ENCODE measurements at regions of chr10 and their contacts with region 1.

Region 1: DNA sequence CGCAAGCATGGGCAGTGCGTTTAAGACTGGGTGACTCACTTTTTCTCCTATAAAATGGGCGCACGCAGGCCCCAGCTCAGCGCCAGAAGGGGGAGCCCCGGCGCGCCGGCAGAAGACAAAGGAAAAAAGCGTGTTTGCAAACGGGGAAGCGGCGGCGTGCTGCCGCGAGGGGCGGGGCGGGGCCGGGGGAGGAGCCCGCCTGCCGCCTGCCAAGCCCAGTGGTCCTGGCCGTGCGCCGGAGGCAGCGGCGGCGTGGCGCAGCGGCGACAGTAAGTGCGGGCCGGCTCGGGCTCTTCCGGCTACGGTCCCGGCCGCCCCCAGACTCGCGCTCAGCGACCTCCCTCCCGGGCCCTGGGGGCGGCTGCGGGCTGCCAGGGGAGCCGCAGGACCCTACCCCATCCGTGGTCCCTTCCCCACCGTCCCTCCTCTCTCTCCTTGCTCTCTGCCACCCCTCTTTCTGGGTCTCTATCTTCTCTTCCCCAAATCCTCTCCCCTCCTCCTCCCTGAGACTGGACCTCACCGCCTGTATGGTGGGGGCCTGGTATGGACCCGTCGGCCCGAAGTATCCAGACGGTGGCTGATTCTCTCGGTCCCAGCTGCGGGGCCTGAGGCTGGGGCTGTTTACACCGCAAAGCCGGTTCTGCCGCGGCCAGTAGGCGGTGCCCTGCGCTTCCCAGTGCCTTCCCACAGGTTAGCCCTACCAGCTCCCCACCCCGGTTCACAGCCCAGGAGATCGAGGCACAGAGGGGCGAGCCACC is at the start of gene SLC29A3:
- DNase-seq: peak; percentile 78 to 90 (median 84)
- H3K4me3 ChIP-seq: peak within 1 kb of the TSS; percentile 77 to 93 (median 86)
- H3K4me3 Mint-ChIP-seq: peak within 1 kb of the TSS; percentile 97 to 98
- H3K27ac ChIP-seq: peak within 1 kb of the TSS; percentile 38 to 83
- H3K27ac Mint-ChIP-seq: peak within 1 kb of the TSS; percentile 85 to 96 (median 91)
- H3K4me1 ChIP-seq: peaks cover 49 to 58% of the 10 kb centered on the region in 2 donors
- H3K4me1 Mint-ChIP-seq: peaks cover 66% of the 10 kb centered on the region
- H3K27me3 ChIP-seq: no peaks in the 10 kb centered on the region
- H3K27me3 Mint-ChIP-seq: peaks cover 0 to 4% (median 0%) of the 10 kb centered on the region in 3 donors
- CTCF ChIP-seq: peak; percentile 69
- polyA plus RNA-seq, gene SLC29A3: 9.7 to 28.4 (median 16.6) TPM

Region 2: DNA sequence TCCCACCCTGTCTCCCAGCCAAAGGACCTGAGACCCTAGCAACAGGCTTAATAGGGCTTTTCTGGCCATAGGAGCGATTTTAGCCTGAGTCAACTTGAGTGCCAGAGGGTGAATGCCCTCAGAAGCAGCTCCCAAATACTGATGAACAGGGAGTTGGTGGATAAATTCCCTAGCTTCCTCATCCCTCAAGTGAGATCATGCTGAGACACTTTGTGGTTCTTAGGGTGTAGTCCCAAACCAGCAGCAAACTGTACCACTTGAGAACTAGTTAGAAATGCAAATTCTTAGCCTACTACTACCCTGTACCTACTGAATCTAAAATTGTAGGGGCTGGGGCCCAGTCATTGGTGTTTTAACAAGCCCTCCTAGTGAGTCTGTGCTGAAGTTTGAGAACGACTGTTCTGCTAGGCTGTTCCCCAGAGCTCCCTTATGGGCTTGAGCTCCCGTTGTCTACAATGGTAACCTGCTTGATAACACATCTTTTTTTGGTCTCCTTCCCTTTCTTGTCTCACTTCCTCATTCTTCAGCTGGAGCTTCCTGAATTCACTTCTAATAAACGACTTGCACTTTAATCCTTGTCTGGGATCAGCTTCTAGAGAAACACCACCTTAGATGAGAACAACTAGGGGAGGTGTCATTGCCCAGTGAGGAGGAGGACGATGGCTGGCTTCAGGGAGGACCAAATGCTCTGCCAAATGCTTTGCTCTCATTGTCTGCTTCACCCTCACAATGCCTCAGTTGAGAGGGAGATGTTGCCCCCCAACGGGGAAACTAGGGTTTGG is 59.3 kb after region 1 on chr10:
- intact Hi-C with region 1: loop called (anchors 5 kb)
- DNase-seq: peak; percentile 54 to 80 (median 76)
- H3K4me3 ChIP-seq: peak overlapping the region in 1 of 3 experiments; percentile 78
- H3K4me3 Mint-ChIP-seq: peak overlapping the region; percentile 52 to 65
- H3K27ac ChIP-seq: peak overlapping the region; percentile 74 to 89
- H3K27ac Mint-ChIP-seq: peak overlapping the region; percentile 78 to 94 (median 92)
- H3K4me1 ChIP-seq: peaks cover 75 to 78% of the 10 kb centered on the region in 2 donors
- H3K4me1 Mint-ChIP-seq: peaks cover 64% of the 10 kb centered on the region
- H3K27me3 ChIP-seq: no peaks in the 10 kb centered on the region
- H3K27me3 Mint-ChIP-seq: peaks cover 0 to 2% (median 2%) of the 10 kb centered on the region in 3 donors
- CTCF ChIP-seq: no peak

Region 3: DNA sequence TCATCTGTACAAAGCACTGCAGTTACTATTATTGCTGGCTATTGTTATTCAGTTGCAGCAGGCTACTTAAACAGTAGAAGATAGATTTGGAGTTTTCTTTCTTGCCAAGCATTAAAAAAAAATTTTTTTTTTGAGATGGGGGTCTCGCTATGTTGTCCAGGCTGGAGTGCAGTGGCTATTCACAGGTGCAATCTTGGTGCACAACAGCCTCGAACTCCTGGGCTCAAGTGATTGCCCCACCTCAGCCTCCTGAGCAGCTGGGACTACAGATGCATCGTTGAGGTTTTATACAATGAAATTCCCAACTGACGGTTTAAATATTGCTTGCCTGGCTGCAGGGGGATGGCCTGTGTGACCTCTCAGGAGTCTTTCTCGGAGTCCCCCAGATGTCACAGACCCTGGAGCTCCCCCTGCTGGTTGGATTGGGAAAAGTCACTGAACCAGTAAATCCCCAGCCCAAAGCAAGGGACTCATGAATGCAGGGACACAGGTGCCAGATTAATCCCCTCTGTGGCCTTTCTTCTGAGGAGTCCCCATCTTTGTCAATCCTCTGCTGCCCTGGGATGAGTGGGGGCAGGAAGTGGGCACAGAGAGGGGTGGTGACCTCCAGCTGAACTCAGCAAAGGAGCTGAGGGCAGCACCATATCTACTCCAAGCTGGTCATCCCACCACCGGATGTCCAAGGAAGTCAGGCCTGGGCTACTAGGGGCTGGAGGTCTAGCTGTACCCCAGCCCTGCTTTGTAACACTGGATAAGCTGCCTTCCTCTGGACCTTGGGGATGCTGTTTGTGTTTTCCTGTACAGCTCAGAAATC is 250.8 kb after region 1 on chr10:
- intact Hi-C with region 1: loop called (anchors 1 to 5 kb)
- DNase-seq: peak; percentile 51 to 63 (median 63)
- H3K4me3 ChIP-seq: no peak overlapping the region
- H3K4me3 Mint-ChIP-seq: no peak overlapping the region
- H3K27ac ChIP-seq: no peak overlapping the region
- H3K27ac Mint-ChIP-seq: no peak overlapping the region
- H3K4me1 ChIP-seq: no peaks in the 10 kb centered on the region
- H3K4me1 Mint-ChIP-seq: no peaks in the 10 kb centered on the region
- H3K27me3 ChIP-seq: no peaks in the 10 kb centered on the region
- H3K27me3 Mint-ChIP-seq: peaks cover 1 to 3% (median 1%) of the 10 kb centered on the region in 3 donors
- CTCF ChIP-seq: peak; percentile 88

Region 4: DNA sequence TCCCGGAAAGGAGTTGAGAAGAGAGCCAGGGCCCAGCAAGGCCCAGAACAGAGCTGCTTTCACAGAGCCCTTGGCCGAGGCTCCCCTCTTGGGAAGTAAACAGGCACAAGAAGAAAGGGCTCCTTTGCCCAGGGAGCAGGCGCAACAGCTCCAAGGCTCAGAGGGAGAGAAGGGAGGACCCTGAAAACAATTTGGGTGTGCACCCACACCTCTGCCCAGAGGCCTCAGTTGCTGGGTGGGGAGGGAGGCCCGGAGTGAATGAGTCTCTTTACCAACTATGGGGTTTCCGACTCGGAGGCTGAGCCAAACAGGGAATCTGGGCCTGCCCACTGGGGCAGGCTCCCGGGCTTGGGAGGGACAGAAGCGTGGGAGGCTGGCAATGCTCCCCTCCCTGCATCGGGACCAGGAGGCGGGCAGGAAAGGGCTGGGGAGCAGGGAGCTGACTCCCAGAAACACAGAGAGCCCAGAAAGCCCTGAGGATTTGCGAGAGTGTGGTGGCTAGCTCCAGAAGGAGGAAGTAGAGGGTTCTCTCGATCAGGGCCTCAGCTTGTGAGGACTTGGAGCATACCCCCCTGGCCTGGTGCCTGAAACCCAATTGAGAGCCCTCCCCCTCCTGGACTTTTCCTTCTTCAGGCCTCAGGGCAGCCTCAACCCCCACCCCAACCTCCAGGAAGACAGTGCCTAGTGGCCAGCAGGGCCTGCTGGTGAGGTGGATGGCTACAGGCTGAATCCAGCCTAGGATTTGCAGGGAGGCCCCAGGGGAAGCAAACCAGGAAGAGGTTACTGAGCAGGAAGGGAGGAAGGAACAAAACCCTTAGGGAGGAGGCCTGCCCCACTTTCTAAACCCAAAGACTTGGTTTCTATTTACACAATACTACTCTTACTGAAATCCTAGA is 394.2 kb after region 1 on chr10:
- intact Hi-C with region 1: loop called in 1 of 2 experiments (anchors 5 kb)
- DNase-seq: peak; percentile 49 to 79 (median 63)
- H3K4me3 ChIP-seq: peak overlapping the region; percentile 64 to 89 (median 75)
- H3K4me3 Mint-ChIP-seq: peak overlapping the region; percentile 95 to 98
- H3K27ac ChIP-seq: peak overlapping the region; percentile 84
- H3K27ac Mint-ChIP-seq: peak overlapping the region; percentile 90 to 97 (median 96)
- H3K4me1 ChIP-seq: peaks cover 93 to 97% of the 10 kb centered on the region in 2 donors
- H3K4me1 Mint-ChIP-seq: peaks cover 96% of the 10 kb centered on the region
- H3K27me3 ChIP-seq: no peaks in the 10 kb centered on the region
- H3K27me3 Mint-ChIP-seq: peaks cover 0 to 1% (median 0%) of the 10 kb centered on the region in 3 donors
- CTCF ChIP-seq: no peak

Region 5: GRCh38 chr10:71812016-71812912 is 493.0 kb after region 1 on chr10:
- intact Hi-C with region 1: loop called in 1 of 2 experiments (anchors 10 kb)
- DNase-seq: peak; percentile 67 to 76 (median 68)
- H3K4me3 ChIP-seq: no peak overlapping the region
- H3K4me3 Mint-ChIP-seq: no peak overlapping the region
- H3K27ac ChIP-seq: peak overlapping the region; percentile 6 to 31
- H3K27ac Mint-ChIP-seq: peak overlapping the region in 5 of 7 donors; percentile 53 to 78 (median 58)
- H3K4me1 ChIP-seq: peaks cover 52 to 78% of the 10 kb centered on the region in 2 donors
- H3K4me1 Mint-ChIP-seq: peaks cover 64% of the 10 kb centered on the region
- H3K27me3 ChIP-seq: no peaks in the 10 kb centered on the region
- H3K27me3 Mint-ChIP-seq: peaks cover 0 to 4% (median 0%) of the 10 kb centered on the region in 3 donors
- CTCF ChIP-seq: peak; percentile 85

Region 6: GRCh38 chr10:71909399-71910083 is 590.3 kb after region 1 on chr10:
- intact Hi-C with region 1: loop called in 1 of 2 experiments (anchors 10 kb)
- DNase-seq: no peak
- H3K4me3 ChIP-seq: no peak overlapping the region
- H3K4me3 Mint-ChIP-seq: no peak overlapping the region
- H3K27ac ChIP-seq: no peak overlapping the region
- H3K27ac Mint-ChIP-seq: peak overlapping the region in 1 of 7 donors; percentile 26
- H3K4me1 ChIP-seq: no peaks in the 10 kb centered on the region
- H3K4me1 Mint-ChIP-seq: peaks cover 10% of the 10 kb centered on the region
- H3K27me3 ChIP-seq: no peaks in the 10 kb centered on the region
- H3K27me3 Mint-ChIP-seq: peaks cover 2 to 6% (median 2%) of the 10 kb centered on the region in 3 donors
- CTCF ChIP-seq: no peak

Region 7: GRCh38 chr10:72016608-72017312 is 697.5 kb after region 1 on chr10:
- intact Hi-C with region 1: no loop called
- DNase-seq: no peak
- H3K4me3 ChIP-seq: no peak overlapping the region
- H3K4me3 Mint-ChIP-seq: peak overlapping the region in 1 of 2 donors; percentile 45
- H3K27ac ChIP-seq: no peak overlapping the region
- H3K27ac Mint-ChIP-seq: peak overlapping the region in 1 of 7 donors; percentile 54
- H3K4me1 ChIP-seq: peaks cover 0 to 4% of the 10 kb centered on the region in 2 donors
- H3K4me1 Mint-ChIP-seq: peaks cover 9% of the 10 kb centered on the region
- H3K27me3 ChIP-seq: no peaks in the 10 kb centered on the region
- H3K27me3 Mint-ChIP-seq: peaks cover 2 to 10% (median 3%) of the 10 kb centered on the region in 3 donors
- CTCF ChIP-seq: no peak

Measured in CD14-positive monocyte (primary cell).